HCT116 (cell line): ENCODE measurements at regions of chr7 and their contacts with region 1.

Region 1: DNA sequence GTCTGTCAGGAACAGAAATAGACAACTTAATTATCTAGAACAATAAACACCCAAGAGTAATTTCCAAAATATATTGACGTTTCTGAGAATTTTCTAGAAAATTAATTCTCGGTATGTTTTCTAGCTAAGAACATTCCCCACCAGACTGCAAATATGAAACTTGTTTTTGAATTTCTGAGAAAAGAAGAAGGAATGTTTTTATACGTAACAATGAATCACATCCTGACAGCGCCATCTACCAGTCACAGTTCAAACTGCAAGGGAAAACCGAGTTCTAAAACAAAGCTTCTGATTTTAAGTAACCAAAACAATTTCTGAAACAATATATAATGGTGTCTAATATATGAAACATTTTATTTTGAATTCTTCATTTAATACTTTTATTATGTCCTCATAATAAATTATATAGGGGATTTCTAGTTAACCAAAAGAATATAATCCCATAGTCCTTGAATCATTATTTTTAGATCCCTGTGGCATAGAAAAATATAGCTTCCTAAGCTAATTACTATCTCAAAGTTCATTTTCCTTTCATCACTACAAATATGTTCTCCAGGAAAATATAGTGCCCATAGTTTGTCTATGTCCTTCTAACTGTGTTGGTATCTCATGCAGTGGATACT is 34.5 kb upstream of the MEOX2 start:
- DNase-seq: peak; percentile 41
- ATAC-seq: no peak
- H3K4me3 ChIP-seq: no peak overlapping the region
- H3K27ac ChIP-seq: no peak overlapping the region
- H3K4me1 ChIP-seq: no peaks in the 10 kb centered on the region
- H3K27me3 ChIP-seq: no peaks in the 10 kb centered on the region
- CTCF ChIP-seq: peak; percentile 59 to 82 (median 68); a peak in 5 of 6 replicates
- POLR2A ChIP-seq: no peak
- RAD21 ChIP-seq: peak; percentile 70

Region 2: GRCh38 chr7:14717816-14718215 is 1003.1 kb before region 1 on chr7:
- CTCF ChIA-PET with region 1: interaction called, 7 read pairs
- POLR2A ChIA-PET with region 1: no interaction called
- RAD21 ChIA-PET with region 1: interaction called, 3 to 4 read pairs
- intact Hi-C with region 1: loop called (anchors 5 kb)
- DNase-seq: no peak
- ATAC-seq: no peak
- H3K4me3 ChIP-seq: no peak overlapping the region
- H3K27ac ChIP-seq: no peak overlapping the region
- H3K4me1 ChIP-seq: peaks cover 0 to 10% of the 10 kb centered on the region in 2 experiments; a peak in 2 of 4 replicates
- H3K27me3 ChIP-seq: no peaks in the 10 kb centered on the region
- CTCF ChIP-seq: peak; percentile 30 to 64 (median 52); a peak in 4 of 6 replicates
- POLR2A ChIP-seq: no peak
- RAD21 ChIP-seq: peak; percentile 77

Region 3: GRCh38 chr7:15199482-15199881 is 521.5 kb before region 1 on chr7:
- CTCF ChIA-PET with region 1: interaction called, 7 read pairs
- POLR2A ChIA-PET with region 1: no interaction called
- RAD21 ChIA-PET with region 1: no interaction called
- intact Hi-C with region 1: loop called (anchors 10 kb)
- DNase-seq: no peak
- ATAC-seq: no peak
- H3K4me3 ChIP-seq: no peak overlapping the region
- H3K27ac ChIP-seq: no peak overlapping the region
- H3K4me1 ChIP-seq: peaks cover 6 to 16% of the 10 kb centered on the region in 2 experiments
- H3K27me3 ChIP-seq: no peaks in the 10 kb centered on the region
- CTCF ChIP-seq: peak; percentile 22 to 58 (median 41); a peak in 5 of 6 replicates
- POLR2A ChIP-seq: no peak
- RAD21 ChIP-seq: peak; percentile 36

Region 4: DNA sequence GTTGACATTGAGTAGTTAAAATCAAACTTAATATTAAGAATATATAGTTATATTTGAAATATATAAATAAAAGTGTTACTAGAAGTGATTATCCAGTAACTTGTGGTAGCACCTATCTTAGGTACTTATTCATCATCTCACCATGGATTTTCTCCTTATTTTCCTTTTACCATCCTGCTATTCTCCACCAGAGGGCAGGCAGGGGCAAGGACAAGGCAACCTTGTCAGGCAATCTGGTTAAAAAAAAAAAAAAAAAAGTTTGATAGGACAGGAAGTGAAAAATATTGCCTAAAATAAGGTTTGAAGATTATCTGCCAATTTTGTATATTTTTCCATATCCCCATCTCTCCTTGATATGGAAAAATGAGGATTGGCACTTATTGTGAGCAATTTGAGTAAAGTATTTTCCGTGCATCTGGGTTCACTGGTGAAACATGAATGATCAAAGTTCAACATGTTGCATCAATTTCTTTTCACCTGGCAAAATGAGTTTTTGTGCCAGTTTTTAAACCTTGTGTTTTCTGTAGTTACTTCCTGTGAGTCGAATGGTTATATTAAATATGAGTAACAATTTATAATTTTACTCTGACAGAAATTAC is 415.9 kb before region 1 on chr7:
- CTCF ChIA-PET with region 1: interaction called, 17 read pairs
- POLR2A ChIA-PET with region 1: no interaction called
- RAD21 ChIA-PET with region 1: no interaction called
- intact Hi-C with region 1: loop called (anchors 5 kb)
- DNase-seq: peak; percentile 33
- ATAC-seq: peak; percentile 73
- H3K4me3 ChIP-seq: no peak overlapping the region
- H3K27ac ChIP-seq: no peak overlapping the region
- H3K4me1 ChIP-seq: no peaks in the 10 kb centered on the region
- H3K27me3 ChIP-seq: no peaks in the 10 kb centered on the region
- CTCF ChIP-seq: peak; percentile 49 to 73 (median 63); a peak in 5 of 6 replicates
- POLR2A ChIP-seq: no peak
- RAD21 ChIP-seq: peak; percentile 73

Region 5: GRCh38 chr7:15326044-15326644 is 394.8 kb before region 1 on chr7:
- CTCF ChIA-PET with region 1: interaction called, 10 read pairs
- POLR2A ChIA-PET with region 1: no interaction called
- RAD21 ChIA-PET with region 1: no interaction called
- intact Hi-C with region 1: loop called (anchors 1 kb)
- DNase-seq: peak; percentile 34
- ATAC-seq: peak; percentile 60; the same call in 1 of the 2 replicates
- H3K4me3 ChIP-seq: no peak overlapping the region
- H3K27ac ChIP-seq: no peak overlapping the region
- H3K4me1 ChIP-seq: no peaks in the 10 kb centered on the region
- H3K27me3 ChIP-seq: no peaks in the 10 kb centered on the region
- CTCF ChIP-seq: peak; percentile 52 to 63 (median 57); a peak in 5 of 6 replicates
- POLR2A ChIP-seq: no peak
- RAD21 ChIP-seq: peak; percentile 74

Region 6: GRCh38 chr7:15709978-15710377 is 11.0 kb before region 1 on chr7:
- CTCF ChIA-PET with region 1: interaction called, 12 read pairs
- POLR2A ChIA-PET with region 1: interaction called, 3 read pairs
- RAD21 ChIA-PET with region 1: no interaction called
- intact Hi-C with region 1: no loop called
- DNase-seq: no peak
- ATAC-seq: no peak
- H3K4me3 ChIP-seq: no peak overlapping the region
- H3K27ac ChIP-seq: no peak overlapping the region
- H3K4me1 ChIP-seq: no peaks in the 10 kb centered on the region
- H3K27me3 ChIP-seq: no peaks in the 10 kb centered on the region
- CTCF ChIP-seq: no peak
- POLR2A ChIP-seq: no peak
- RAD21 ChIP-seq: no peak

Region 7: DNA sequence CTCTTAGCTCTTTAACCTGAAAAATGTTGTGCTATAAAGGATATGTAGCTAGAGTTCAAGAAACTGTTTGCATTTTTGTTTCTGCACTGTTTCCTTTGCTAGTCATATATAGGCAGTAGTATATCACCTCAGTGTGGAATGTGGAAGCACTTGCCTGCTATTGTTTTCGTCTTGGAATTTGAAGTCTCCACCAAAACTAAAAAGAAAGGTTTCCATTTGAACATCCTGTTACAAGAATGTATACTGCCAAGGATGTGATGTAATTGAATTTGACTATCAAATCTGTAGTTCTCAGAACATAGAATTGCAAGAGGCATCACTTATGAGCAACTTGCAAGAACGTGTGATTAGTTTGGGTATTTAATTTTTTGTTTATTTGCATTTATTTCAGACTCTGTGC is 16.6 kb after region 1 on chr7:
- CTCF ChIA-PET with region 1: interaction called, 20 read pairs
- POLR2A ChIA-PET with region 1: no interaction called
- RAD21 ChIA-PET with region 1: no interaction called
- intact Hi-C with region 1: no loop called
- DNase-seq: no peak
- ATAC-seq: no peak
- H3K4me3 ChIP-seq: no peak overlapping the region
- H3K27ac ChIP-seq: no peak overlapping the region
- H3K4me1 ChIP-seq: no peaks in the 10 kb centered on the region
- H3K27me3 ChIP-seq: no peaks in the 10 kb centered on the region
- CTCF ChIP-seq: no peak
- POLR2A ChIP-seq: no peak
- RAD21 ChIP-seq: no peak